ENCODE measurements at regions of chr6 and their contacts with region 1.

Region 1: GRCh38 chr6:161370880-161371279 is 97.0 kb upstream of the AGPAT4 start:
- DNase-seq: peak; percentile 73
- ATAC-seq: peak; percentile 72
- H3K4me3 ChIP-seq: no peak overlapping the region
- H3K27ac ChIP-seq: no peak overlapping the region
- H3K4me1 ChIP-seq: peaks cover 10% of the 10 kb centered on the region
- H3K27me3 ChIP-seq: no peaks in the 10 kb centered on the region
- CTCF ChIP-seq: peak; percentile 93

Region 2: DNA sequence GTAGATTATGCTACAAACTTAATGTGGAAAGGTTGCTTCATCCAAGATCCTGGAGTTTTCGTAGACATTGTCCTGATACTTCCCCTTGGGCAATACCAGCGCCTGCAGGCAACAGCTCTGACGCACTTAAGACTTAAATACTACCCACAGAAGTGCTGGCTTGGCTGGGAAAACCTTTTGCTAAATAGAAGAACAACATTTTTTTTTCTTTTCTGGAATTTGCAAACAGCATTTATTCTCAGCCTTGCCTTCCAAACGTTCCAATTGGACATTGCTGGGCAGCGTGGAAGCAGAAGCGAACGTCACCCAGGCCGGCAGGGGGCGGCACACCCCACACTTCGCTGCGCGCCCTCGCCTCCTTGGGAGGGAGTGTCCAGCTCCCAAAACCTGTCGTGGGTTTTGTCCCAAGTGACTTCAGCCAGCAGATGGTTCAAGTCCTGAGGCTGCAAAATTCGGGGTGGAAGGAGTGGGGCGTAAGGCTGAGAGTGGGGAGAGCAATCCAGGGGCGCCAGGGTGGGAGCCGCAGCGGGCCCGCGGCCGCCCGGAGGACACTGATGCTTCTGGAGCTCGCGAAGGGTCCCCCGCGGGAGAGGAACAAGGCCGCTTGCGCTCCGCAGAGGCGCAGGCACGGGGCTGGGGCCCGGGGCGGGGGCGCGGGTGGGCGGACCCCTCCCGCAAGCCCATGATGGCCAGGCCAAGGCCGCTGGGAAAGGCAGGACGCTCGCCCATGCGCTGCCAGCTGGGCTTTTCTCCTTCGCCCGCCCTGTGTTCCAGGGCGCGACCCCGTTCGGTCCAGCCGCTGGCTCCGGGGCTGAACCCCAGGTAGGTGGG is 440.1 kb before region 1 on chr6:
- intact Hi-C with region 1: loop called (anchors 5 kb)
- DNase-seq: peak; percentile 89
- ATAC-seq: peak; percentile 97
- H3K4me3 ChIP-seq: peak overlapping the region; percentile 50
- H3K27ac ChIP-seq: no peak overlapping the region
- H3K4me1 ChIP-seq: peaks cover 4% of the 10 kb centered on the region
- H3K27me3 ChIP-seq: no peaks in the 10 kb centered on the region
- CTCF ChIP-seq: peak; percentile 92

Region 3: GRCh38 chr6:161111261-161111660 is 259.6 kb before region 1 on chr6:
- intact Hi-C with region 1: loop called (anchors 10 kb)
- DNase-seq: no peak
- ATAC-seq: peak; percentile 46
- H3K4me3 ChIP-seq: no peak overlapping the region
- H3K27ac ChIP-seq: no peak overlapping the region
- H3K4me1 ChIP-seq: no peaks in the 10 kb centered on the region
- H3K27me3 ChIP-seq: no peaks in the 10 kb centered on the region
- CTCF ChIP-seq: no peak

Region 4: GRCh38 chr6:161486361-161487216 is 115.7 kb after region 1 on chr6:
- intact Hi-C with region 1: no loop called
- DNase-seq: no peak
- ATAC-seq: no peak
- H3K4me3 ChIP-seq: no peak overlapping the region
- H3K27ac ChIP-seq: no peak overlapping the region
- H3K4me1 ChIP-seq: peaks cover 11% of the 10 kb centered on the region
- H3K27me3 ChIP-seq: no peaks in the 10 kb centered on the region
- CTCF ChIP-seq: no peak

Measured in upper lobe of right lung (tissue), 1 donor.